Heart left ventricle (tissue), 16 donors: ENCODE measurements at regions of chr10 and their contacts with region 1.

Region 1: GRCh38 chr10:3805791-3806461 is 20.9 kb upstream of the KLF6 start:
- DNase-seq: peak in 4 of 5 donors; percentile 53 to 76 (median 59)
- ATAC-seq: peak in 3 of 4 donors; percentile 8 to 47 (median 43)
- H3K4me3 ChIP-seq: peak overlapping the region in 6 of 12 donors; percentile 4 to 31 (median 9)
- H3K27ac ChIP-seq: peak overlapping the region; percentile 66 to 96 (median 84)
- H3K4me1 ChIP-seq: peaks cover 0 to 94% (median 76%) of the 10 kb centered on the region in 12 donors
- H3K27me3 ChIP-seq: no peaks in the 10 kb centered on the region
- CTCF ChIP-seq: no peak
- POLR2A ChIP-seq: no peak

Region 2: DNA sequence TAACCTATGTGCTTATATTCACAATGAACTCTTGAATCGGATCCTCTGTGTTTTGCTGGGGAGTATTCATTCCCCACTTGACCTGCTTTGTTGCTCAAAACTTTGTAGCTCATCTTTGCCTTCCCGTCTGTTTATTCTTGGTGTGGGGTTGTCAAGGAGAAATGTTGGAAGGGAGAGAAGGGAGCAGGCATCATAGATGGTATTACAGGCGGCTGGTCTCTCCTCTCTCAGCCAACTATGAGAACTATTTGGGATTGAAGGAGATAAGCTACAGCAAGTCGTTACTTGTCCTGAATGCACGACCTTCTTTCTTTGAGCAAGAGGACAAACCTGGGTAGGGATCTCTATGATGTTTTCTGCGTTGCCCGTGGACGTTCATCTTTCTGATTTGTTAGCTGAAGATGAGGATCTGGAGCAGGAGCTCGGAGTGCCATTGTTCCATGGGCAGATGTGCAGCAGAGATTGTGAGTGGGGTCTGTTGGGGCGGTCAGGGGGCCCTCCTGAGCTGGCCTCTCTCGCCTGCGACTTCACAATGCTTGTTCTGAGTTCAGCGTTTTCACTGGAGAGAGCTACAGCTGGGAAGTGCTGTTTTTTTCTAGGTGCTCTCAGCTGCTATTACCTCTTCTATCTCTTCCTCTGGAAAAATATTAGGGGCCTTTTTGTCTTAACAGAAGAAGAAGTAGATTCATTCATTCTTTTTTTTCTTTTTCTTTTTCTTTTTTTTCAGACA is 106.0 kb after region 1 on chr10:
- intact Hi-C with region 1: loop called in 1 of 10 experiments (anchors 10 kb)
- DNase-seq: no peak
- ATAC-seq: peak; percentile 87 to 90 (median 89)
- H3K4me3 ChIP-seq: peak overlapping the region in 11 of 12 donors; percentile 6 to 56 (median 48)
- H3K27ac ChIP-seq: peak overlapping the region; percentile 53 to 91 (median 82)
- H3K4me1 ChIP-seq: peaks cover 0 to 36% (median 0%) of the 10 kb centered on the region in 12 donors
- H3K27me3 ChIP-seq: no peaks in the 10 kb centered on the region
- CTCF ChIP-seq: no peak
- POLR2A ChIP-seq: peak in 1 of 2 donors; percentile 30